ENCODE measurements at regions of chr20 and their contacts with region 1.

Region 1: DNA sequence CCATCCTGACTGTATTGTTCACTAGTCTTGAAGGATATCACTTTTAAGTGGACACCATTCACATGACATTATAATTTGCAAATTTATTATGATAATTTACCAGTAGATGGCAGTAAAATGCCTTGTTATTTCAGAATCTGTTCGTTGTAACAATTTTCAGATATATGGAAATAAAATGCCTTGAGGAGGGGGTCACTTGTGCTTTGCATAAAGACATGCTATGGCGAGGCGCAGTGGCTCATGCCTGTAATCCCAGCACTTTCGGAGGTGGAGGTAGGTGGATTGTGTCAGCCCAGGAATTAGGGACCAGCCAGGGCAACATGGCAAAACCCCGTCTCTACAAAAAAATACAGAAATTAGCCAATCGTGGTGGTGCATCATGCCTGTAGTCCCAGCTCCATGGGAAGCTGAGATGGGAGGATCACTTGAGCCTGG is 9.0 kb upstream of the NCOA6 start:
- DNase-seq: peak; percentile 40 to 68 (median 64)
- H3K4me3 ChIP-seq: no peak overlapping the region
- H3K27ac ChIP-seq: no peak overlapping the region
- H3K4me1 ChIP-seq: peaks cover 0 to 8% (median 0%) of the 10 kb centered on the region in 4 experiments
- H3K27me3 ChIP-seq: peaks cover 0 to 2% (median 0%) of the 10 kb centered on the region in 5 experiments

Region 2: DNA sequence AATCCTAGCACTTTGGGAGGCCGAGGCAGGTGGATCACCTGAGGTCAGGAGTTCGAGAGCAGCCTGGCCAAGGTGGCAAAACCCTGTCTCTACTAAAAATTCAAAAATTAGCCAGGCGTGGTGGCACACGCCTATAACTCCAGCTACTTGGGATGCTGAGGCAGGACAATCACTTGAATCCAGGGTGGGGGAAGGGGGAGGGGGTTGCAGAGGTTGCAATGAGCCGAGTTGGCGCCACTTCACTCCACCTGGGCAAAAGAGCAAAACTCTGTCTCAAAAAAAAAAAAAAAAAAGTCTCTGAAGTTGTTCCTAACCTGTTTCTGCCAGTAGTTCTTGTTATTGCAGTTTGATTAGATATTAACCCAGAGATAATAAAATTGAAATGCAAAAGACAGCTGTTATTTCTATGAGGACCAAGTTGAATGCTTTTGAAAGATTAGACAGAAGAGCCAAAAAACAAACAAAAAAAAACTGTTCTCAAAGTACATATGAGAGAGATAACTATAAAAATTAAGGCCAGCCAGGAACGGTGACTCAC is 180.2 kb before region 1 on chr20:
- CTCF ChIA-PET with region 1: no interaction called
- POLR2A ChIA-PET with region 1: no interaction called
- DNase-seq: no peak
- H3K4me3 ChIP-seq: no peak overlapping the region
- H3K27ac ChIP-seq: no peak overlapping the region
- H3K4me1 ChIP-seq: no peaks in the 10 kb centered on the region
- H3K27me3 ChIP-seq: no peaks in the 10 kb centered on the region

Region 3: GRCh38 chr20:34848597-34848996 is 14.1 kb after region 1 on chr20:
- CTCF ChIA-PET with region 1: interaction called, 10 read pairs
- POLR2A ChIA-PET with region 1: interaction called, 5 read pairs
- DNase-seq: no peak
- H3K4me3 ChIP-seq: no peak overlapping the region
- H3K27ac ChIP-seq: no peak overlapping the region
- H3K4me1 ChIP-seq: no peaks in the 10 kb centered on the region
- H3K27me3 ChIP-seq: no peaks in the 10 kb centered on the region

Region 4: DNA sequence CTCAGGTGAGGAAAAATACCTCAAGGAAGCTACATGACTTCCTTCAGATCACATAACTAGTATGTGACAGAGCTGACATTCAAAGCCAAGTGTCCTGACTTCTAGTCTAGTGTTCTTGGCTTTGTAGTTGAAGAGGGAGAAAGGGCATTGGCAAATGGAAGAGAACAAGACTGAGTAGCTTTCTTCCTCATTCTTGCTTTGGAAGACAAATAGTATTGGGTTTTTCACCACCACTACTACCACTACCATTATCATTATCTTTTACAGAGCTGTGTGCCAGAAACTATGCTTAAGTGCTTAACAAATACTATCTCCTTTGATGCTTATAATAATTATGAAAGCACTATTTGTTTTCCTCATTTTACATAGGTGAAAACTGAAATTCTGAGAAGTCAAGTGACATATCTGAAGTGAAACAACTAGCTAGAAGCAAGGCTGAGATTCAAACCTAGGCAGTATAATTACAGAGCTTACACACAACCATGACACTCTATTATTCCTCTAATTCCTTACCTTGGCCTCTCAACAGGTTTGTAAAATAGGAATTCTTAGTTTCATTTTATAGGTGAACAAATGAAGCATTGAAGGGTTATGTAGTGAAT is 48.7 kb after region 1 on chr20:
- CTCF ChIA-PET with region 1: no interaction called
- POLR2A ChIA-PET with region 1: no interaction called
- DNase-seq: no peak
- H3K4me3 ChIP-seq: no peak overlapping the region
- H3K27ac ChIP-seq: no peak overlapping the region
- H3K4me1 ChIP-seq: no peaks in the 10 kb centered on the region
- H3K27me3 ChIP-seq: no peaks in the 10 kb centered on the region

Region 5: DNA sequence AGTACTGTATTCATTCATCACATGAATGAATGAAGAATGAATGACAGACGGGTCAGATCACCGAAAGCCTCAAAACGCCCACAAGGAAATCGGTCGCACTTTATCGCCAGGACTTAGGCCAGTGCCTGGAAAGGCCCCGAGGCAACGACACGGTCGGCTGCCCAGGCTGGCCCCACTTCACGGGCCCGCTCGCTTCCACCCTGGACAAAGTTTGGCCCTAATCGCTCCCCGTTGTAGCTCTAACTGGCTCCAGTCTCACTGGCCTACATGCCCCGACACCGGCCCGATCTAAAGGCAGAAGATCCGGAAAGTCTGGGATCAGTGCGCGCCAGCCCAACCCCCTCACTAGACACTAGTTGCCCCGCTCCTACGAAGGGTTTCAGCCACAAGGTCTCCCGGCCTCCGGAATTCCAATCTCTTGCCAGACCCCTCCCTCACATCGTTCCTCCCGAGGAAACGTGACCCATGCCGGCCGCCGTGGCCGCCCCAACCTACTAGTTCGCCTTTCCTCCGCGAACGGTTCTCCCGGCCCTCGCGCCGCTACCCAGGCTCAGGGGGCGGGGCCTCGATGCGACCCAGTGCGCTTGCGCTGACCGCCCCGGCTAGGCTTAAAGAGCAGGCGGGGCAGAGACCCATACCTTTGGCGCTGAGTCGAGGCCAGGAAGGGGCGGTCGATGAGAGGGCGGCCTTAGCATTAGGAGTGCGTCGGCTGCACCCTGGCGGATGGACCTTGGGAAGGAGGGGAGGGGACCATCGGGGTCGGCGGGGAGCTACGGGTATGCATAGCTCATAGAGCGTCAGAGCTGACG is 121.0 kb after region 1 on chr20 and contains the starts of genes GSS and MYH7B:
- CTCF ChIA-PET with region 1: interaction called, 13 read pairs
- POLR2A ChIA-PET with region 1: no interaction called
- DNase-seq: peak; percentile 97 to 99 (median 98)
- H3K4me3 ChIP-seq: peak within 1 kb of the TSS; percentile 64 to 97 (median 84)
- H3K27ac ChIP-seq: peak within 1 kb of the TSS; percentile 74 to 90
- H3K4me1 ChIP-seq: peaks cover 8 to 16% (median 13%) of the 10 kb centered on the region in 4 experiments
- H3K27me3 ChIP-seq: no peaks in the 10 kb centered on the region